HEK293T (cell line): ENCODE measurements at regions of chr22 and their contacts with region 1.

Region 1: DNA sequence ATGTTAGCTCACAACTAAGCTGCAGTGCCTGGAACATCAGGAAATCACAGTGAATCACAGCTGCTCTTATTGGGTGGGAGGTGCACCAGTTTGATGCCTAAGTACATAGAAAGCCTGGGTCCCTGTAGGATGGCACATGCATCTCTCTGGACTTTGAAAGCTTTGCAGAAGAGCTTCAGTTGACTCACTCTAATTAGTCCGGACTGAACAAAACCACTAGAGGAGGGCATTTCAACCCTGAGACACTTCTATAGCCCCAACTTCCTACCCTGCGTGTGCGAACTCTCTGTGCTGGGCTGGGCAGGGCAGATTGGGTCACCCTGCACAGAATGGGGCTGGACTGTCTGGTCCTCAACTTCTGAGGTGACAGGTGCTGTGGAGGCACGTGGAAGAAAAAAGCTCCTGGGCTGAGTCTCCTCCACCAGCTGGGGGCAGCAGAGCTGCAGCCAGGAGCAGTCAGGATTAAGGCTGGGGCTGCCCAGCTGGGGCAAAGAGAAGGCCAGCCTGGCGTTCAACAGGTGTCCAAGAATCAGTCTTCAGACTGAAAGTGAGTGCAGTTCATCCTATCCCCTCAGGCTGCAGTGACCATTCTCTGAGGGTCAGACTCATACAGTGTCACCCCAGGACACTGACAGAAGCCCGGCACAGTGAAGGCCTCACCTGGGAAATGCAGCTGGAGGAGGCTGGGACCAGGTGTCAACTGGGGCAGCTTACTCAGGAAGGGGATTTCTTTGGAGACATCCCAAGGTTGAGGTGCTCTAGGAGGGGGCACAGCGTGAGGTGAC is 22.1 kb downstream of the GGTLC2 start:
- DNase-seq: peak; percentile 52

Region 2: DNA sequence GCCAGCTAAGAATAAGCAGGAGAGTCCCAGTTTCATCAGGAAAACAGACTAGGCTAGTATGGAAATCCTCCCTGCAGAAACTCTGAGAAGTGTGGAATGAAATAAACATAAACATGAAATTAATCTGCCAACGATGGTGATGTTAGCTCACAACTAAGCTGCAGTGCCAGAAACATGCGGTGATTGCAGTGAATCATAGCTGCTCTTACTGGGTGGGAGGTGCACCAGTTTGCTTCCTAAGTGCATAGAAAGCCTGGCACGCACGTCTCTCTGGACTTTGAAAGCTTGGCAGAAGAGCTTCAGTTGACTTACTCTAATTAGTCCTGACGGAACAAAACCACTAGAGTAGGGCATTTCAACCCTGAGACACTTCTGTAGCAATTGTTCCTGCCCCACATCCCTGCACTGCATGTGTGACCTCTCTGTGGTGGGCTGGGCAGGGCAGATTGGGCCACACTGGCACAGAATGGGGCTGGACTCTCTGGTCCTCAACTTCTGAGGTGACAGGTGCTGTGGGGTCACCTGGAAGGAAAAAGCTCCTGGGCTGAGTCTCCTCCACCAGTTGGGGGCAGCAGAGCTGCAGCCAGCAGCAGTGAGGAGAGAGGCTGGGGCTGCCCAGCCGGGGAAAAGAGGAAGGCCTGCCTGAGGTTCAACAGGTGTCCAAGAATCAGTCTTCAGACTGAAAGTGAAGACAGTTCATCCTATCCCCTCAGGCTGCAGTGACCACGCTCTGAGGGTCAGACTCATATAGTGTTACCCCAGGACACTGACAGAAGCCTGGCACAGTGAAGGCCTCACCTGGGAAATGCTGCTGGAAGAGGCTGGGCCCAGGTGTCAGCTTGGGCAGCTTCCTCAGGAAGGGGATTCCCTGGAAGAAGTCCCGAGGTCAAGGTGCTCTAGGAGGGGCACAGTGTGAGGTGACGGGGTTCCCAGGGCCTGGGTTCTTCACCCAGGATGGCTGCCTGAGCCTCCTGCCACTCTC is 18.4 kb after region 1 on chr22:
- CTCF ChIA-PET with region 1: interaction called, 16 read pairs
- POLR2A ChIA-PET with region 1: no interaction called
- DNase-seq: peak; percentile 46

Region 3: DNA sequence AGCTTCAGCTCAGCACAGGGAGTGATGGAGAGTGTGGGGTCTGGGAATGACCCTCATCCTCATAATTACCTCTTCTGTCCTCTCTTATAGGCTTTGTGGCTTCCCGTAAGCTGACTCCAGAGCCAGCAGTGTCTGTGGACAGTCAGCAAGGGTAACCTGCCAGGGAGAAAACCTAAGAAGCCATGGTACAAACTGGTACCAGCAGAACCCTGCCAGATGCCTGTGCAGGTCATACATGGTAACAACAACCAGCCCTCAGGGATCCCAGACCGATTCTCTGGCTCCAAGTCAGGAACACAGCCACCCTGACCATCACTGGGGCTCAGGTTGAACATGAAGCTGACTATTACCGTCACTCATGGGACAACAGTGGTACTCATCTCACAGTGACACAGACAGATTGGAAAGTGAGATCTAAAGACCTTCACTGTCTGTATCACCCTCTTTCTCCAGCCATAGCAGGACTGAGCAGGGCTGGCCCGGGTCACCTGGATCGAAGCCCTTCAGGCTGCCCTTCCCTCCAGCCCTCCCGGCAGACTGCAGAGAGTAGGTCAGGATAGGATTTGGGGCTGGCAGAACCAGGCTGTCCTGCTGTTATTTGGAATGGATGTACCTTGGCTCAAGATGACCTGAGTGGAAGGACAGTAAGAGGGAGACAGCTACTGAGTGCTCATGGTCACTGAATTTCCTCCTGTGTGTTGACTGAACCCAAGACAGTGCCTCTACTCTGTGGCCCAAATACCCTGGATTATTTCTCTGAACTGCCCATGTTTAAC is 72.5 kb after region 1 on chr22:
- CTCF ChIA-PET with region 1: no interaction called
- POLR2A ChIA-PET with region 1: no interaction called
- DNase-seq: no peak